ENCODE measurements at regions of chr12 and their contacts with region 1.

Region 1: GRCh38 chr12:5796171-5796958 is 148.7 kb downstream of the ANO2 start:
- DNase-seq: peak; percentile 30
- ATAC-seq: peak; percentile 86
- H3K4me3 ChIP-seq: no peak overlapping the region
- H3K27ac ChIP-seq: no peak overlapping the region
- H3K4me1 ChIP-seq: no peaks in the 10 kb centered on the region
- H3K27me3 ChIP-seq: peaks cover 35% of the 10 kb centered on the region
- CTCF ChIP-seq: peak; percentile 72
- POLR2A ChIP-seq: no peak
- RAD21 ChIP-seq: peak; percentile 91

Region 2: GRCh38 chr12:5013266-5013730 is 783.1 kb before region 1 on chr12:
- CTCF ChIA-PET with region 1: no interaction called
- POLR2A ChIA-PET with region 1: no interaction called
- dilution Hi-C with region 1: no loop called
- in situ Hi-C with region 1: loop called (anchors 10 kb)
- intact Hi-C with region 1: no loop called
- DNase-seq: no peak
- ATAC-seq: no peak
- H3K4me3 ChIP-seq: no peak overlapping the region
- H3K27ac ChIP-seq: no peak overlapping the region
- H3K4me1 ChIP-seq: no peaks in the 10 kb centered on the region
- H3K27me3 ChIP-seq: peaks cover 49% of the 10 kb centered on the region
- CTCF ChIP-seq: no peak
- POLR2A ChIP-seq: no peak
- RAD21 ChIP-seq: no peak

Region 3: DNA sequence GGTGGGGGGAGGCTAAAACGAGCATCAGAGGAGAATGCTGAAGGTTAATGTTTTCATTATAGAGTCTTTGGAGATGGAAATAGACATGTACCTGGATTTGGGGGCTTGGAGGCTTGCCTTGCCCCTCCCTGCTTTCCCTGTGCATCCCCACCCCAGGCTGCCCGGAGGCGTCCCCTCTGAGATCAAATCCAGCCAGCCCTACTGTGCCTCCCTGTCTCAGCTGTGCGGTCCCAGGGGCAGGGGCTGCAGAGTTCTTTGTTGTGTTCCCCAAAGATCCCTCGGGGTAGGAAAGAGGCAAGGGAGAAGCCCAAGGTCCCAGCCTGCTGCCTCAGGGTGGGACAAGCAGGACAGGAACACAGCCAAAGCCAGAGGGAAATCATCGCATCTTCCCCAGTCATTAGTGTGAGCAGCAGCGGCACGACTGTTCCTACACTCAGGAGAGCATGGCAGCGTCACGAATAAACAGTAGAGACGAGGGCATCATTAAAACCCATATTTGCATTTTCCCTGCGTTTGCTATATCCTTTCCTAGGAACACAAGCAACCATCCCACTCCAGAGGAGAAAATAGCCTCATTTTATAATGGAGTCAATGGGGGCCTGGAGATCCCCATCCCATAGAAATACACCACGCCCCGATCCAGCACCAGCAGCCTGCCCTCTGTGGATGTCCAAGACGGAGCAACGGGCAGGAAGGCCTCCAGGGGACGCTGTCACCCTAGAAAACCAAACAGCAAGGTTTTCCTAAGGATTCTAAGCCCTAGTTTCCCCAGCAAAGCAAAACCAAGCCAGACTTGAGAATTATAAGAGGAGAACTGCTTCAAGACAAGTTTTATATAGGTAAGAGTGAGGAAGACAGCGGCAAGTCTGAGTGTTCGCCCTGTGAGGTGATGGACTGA is 116.3 kb after region 1 on chr12:
- CTCF ChIA-PET with region 1: no interaction called
- POLR2A ChIA-PET with region 1: no interaction called
- dilution Hi-C with region 1: no loop called
- in situ Hi-C with region 1: no loop called
- intact Hi-C with region 1: no loop called
- DNase-seq: no peak
- ATAC-seq: 0 out of 2 replicates have a peak, but pooled peaks have one; percentile 37
- H3K4me3 ChIP-seq: no peak overlapping the region
- H3K27ac ChIP-seq: no peak overlapping the region
- H3K4me1 ChIP-seq: no peaks in the 10 kb centered on the region
- H3K27me3 ChIP-seq: peaks cover 31% of the 10 kb centered on the region
- CTCF ChIP-seq: peak; percentile 30
- POLR2A ChIP-seq: no peak
- RAD21 ChIP-seq: no peak

Region 4: GRCh38 chr12:5996459-5996858 is 200.1 kb after region 1 on chr12:
- CTCF ChIA-PET with region 1: no interaction called
- POLR2A ChIA-PET with region 1: no interaction called
- dilution Hi-C with region 1: no loop called
- in situ Hi-C with region 1: no loop called
- intact Hi-C with region 1: no loop called
- DNase-seq: no peak
- ATAC-seq: no peak
- H3K4me3 ChIP-seq: no peak overlapping the region
- H3K27ac ChIP-seq: no peak overlapping the region
- H3K4me1 ChIP-seq: no peaks in the 10 kb centered on the region
- H3K27me3 ChIP-seq: peaks cover 1% of the 10 kb centered on the region; the same call in 1 of the 2 replicates
- CTCF ChIP-seq: no peak
- POLR2A ChIP-seq: no peak
- RAD21 ChIP-seq: no peak